Activated CD4-positive, alpha-beta T cell treated with anti-CD3 and anti-CD28 coated beads, Interleukin-2, amount 10 ng/mL, durations not matched to agents 24 days and 14 days (primary cell): ENCODE measurements at regions of chr3 and their contacts with region 1.

Region 1: DNA sequence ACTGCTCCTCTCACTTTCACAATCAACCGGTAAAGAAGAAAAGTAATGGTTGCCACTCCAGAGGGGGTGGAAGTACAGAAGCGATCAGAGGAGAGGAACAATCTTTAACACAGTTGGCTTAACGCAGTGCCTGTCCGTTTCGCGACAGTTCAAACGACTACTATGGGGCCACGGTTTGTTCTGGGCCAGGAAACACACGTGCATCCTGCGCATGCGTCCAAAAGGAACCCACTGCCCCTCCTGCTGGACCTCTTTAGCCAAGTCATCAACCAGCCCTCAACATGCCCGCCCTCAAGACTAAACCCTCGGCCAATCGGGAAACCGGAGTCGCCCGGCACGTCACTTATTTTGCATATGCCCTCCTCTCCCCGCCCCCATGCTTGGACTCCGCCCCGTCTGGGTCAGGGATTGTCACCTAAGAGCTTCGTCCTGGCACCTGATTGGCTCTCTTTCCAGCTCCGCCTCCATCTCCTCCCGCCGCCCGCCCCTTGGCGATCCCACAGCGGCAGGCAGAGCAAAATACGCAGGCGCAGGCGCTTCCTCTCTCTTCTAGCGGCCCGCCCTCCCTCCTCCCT is 345 bp upstream of the CDV3 start:
- DNase-seq: peak; percentile 100
- H3K4me3 Mint-ChIP-seq: peak overlapping the region; percentile 85
- H3K27ac Mint-ChIP-seq: peak overlapping the region; percentile 99
- H3K4me1 Mint-ChIP-seq: peaks cover 46% of the 10 kb centered on the region
- H3K27me3 Mint-ChIP-seq: no peaks in the 10 kb centered on the region

Region 2: GRCh38 chr3:133448478-133449122 is 124.5 kb before region 1 on chr3:
- intact Hi-C with region 1: loop called (anchors 1 kb)
- DNase-seq: peak; percentile 75
- H3K4me3 Mint-ChIP-seq: no peak overlapping the region
- H3K27ac Mint-ChIP-seq: peak overlapping the region; percentile 69
- H3K4me1 Mint-ChIP-seq: peaks cover 26% of the 10 kb centered on the region
- H3K27me3 Mint-ChIP-seq: peaks cover 3% of the 10 kb centered on the region

Region 3: DNA sequence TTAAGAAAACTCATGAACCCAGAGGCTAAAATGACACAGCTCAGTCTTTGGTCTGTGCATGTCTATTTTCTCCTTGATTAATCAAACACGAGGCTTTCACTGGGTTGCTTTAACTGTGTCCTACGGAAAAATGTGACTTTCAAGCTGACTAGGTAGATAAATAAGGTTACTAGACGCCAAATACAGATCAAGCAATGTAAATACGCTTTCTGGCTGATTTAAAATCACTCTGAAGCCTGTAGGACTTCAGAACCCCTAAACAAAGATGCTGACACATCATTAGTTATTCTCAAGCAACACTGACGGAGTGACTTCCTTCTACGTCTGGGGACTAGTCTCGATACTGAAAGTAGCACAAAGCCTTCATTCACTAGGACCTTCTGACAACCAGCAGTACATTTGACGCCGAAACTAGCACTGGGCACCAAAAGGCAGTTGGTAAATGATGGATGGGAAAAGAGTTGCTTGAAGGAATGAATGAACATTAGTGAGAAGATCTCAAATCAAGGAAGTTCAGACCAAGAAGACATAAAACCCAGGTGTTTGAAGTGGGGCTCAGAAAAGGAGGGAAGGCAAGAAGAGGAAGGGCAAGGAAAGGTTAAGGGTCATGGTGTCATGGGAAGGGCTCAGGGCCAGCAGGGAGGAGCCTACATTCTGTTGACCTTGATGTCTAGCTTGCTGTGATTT is 66.8 kb before region 1 on chr3:
- intact Hi-C with region 1: loop called (anchors 2 kb)
- DNase-seq: peak; percentile 83
- H3K4me3 Mint-ChIP-seq: peak overlapping the region; percentile 73
- H3K27ac Mint-ChIP-seq: peak overlapping the region; percentile 83
- H3K4me1 Mint-ChIP-seq: peaks cover 13% of the 10 kb centered on the region
- H3K27me3 Mint-ChIP-seq: no peaks in the 10 kb centered on the region

Region 4: DNA sequence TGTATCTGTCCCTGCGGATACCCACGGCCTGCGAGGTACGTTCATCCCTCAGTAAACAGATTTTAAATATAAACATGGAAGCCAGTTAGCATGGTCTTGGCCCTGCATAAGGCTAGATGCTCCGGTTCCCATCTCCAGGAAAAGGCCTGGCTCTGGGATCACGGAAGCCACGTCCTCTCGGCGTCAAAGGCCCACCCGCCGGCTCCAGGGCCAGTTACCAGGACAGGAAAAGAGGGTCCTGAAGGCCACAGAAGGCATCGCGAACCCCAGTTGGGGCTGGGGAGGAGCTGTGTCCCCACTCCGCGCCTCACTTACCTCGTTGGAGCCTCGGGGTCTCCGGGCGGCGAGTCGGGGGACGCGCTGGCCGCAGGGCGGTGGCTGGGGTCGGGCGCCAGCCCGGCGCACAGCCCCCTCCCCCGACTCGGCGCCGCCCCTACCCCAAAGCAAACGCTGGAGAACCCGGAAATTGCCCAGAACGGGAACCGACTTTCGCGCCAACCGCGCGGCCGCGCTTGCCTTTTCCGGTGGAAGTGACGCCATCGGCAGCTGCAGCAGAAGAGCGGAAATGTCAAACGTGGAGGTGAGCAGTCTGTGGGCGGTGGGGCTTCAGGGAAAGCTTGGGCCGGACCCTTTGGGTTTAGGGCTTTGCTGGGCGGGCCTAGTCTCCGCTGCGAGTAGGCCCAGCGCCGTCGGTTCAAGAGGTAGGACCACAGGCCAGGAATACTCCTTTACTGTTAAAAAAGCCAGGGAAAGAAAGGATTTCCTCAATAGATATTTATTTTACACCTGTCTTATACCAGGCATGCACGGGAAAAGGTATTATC is 88.5 kb after region 1 on chr3 and contains the start of gene TOPBP1:
- intact Hi-C with region 1: loop called (anchors 1 kb)
- DNase-seq: peak; percentile 98
- H3K4me3 Mint-ChIP-seq: peak within 1 kb of the TSS; percentile 86
- H3K27ac Mint-ChIP-seq: peak within 1 kb of the TSS; percentile 94
- H3K4me1 Mint-ChIP-seq: peaks cover 26% of the 10 kb centered on the region
- H3K27me3 Mint-ChIP-seq: no peaks in the 10 kb centered on the region
- total RNA-seq, gene TOPBP1: 92.6 and 97.9 TPM in 2 replicates

Region 5: GRCh38 chr3:134378384-134378783 is 805.2 kb after region 1 on chr3:
- intact Hi-C with region 1: loop called (anchors 5 kb)
- DNase-seq: peak; percentile 66
- H3K4me3 Mint-ChIP-seq: no peak overlapping the region
- H3K27ac Mint-ChIP-seq: no peak overlapping the region
- H3K4me1 Mint-ChIP-seq: peaks cover 8% of the 10 kb centered on the region
- H3K27me3 Mint-ChIP-seq: peaks cover 45% of the 10 kb centered on the region

Region 6: DNA sequence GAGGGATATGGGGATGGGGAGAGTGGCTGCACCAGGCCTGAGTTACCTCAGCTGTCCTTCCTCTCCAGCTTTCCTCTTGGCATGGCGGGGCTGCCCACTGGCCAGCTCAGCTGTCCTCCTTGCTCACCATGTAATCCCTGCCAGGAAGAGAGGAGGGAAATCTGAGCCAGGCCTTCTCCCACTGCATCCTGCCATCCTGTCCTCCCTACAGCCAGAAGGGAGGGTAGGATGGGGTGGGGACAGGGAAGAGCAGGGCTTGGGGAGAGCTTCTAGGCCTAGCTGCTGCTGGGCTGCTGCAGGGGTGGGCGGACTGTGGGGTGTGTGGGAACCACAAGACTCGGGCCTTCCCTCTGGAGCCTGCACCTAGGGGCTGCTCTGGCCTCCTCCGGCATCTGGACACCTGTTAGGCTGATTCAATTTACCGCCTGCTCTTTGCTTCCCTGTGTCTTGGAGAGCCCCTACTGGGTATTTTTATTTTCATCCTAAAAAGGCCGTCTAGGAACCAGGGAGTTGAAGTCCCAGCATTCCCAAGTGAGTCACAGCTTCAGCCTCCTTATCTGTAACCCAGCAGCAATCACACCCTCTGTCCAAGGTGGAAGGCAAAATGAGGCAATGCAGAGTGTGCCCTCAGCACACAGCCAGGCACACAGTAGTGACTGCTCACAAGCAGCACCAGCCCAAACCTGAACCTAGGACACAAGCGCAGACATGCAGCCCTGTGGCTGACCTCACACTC is 1090.7 kb after region 1 on chr3:
- intact Hi-C with region 1: no loop called
- DNase-seq: no peak
- H3K4me3 Mint-ChIP-seq: no peak overlapping the region
- H3K27ac Mint-ChIP-seq: no peak overlapping the region
- H3K4me1 Mint-ChIP-seq: no peaks in the 10 kb centered on the region
- H3K27me3 Mint-ChIP-seq: no peaks in the 10 kb centered on the region